ENCODE measurements at regions of chr11 and their contacts with region 1.

Region 1: DNA sequence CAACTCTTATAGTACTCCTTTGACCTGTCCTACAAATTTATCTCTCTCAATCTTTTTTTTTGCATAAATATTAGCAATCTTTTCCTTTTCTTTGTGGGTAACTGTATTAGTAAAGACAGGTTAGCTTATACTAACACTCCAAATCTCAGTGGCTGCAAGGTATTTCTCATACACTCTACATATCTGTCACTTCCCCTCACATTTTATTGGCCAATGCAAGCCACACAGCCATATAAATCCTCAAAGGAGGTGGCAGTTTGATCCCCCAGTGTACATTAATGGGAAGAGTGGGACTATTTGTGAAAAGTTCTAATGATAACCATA is 42.6 kb upstream of the EED start:
- DNase-seq: no peak
- H3K4me3 Mint-ChIP-seq: no peak overlapping the region
- H3K27ac Mint-ChIP-seq: no peak overlapping the region
- H3K4me1 Mint-ChIP-seq: peaks cover 21% of the 10 kb centered on the region
- H3K27me3 Mint-ChIP-seq: no peaks in the 10 kb centered on the region

Region 2: GRCh38 chr11:86047275-86047991 is 154.5 kb before region 1 on chr11:
- intact Hi-C with region 1: loop called (anchors 1 kb)
- DNase-seq: no peak
- H3K4me3 Mint-ChIP-seq: peak overlapping the region; percentile 69
- H3K27ac Mint-ChIP-seq: peak overlapping the region; percentile 91
- H3K4me1 Mint-ChIP-seq: peaks cover 88% of the 10 kb centered on the region
- H3K27me3 Mint-ChIP-seq: no peaks in the 10 kb centered on the region

Region 3: GRCh38 chr11:86138958-86139357 is 63.0 kb before region 1 on chr11:
- intact Hi-C with region 1: loop called (anchors 2 kb)
- DNase-seq: peak; percentile 37
- H3K4me3 Mint-ChIP-seq: peak overlapping the region; percentile 57
- H3K27ac Mint-ChIP-seq: peak overlapping the region; percentile 81
- H3K4me1 Mint-ChIP-seq: peaks cover 75% of the 10 kb centered on the region
- H3K27me3 Mint-ChIP-seq: no peaks in the 10 kb centered on the region

Region 4: GRCh38 chr11:86182976-86183584 is 18.9 kb before region 1 on chr11:
- intact Hi-C with region 1: loop called (anchors 2 kb)
- DNase-seq: peak; percentile 30
- H3K4me3 Mint-ChIP-seq: no peak overlapping the region
- H3K27ac Mint-ChIP-seq: no peak overlapping the region
- H3K4me1 Mint-ChIP-seq: peaks cover 9% of the 10 kb centered on the region
- H3K27me3 Mint-ChIP-seq: no peaks in the 10 kb centered on the region

Region 5: GRCh38 chr11:86370922-86371594 is 169.1 kb after region 1 on chr11:
- intact Hi-C with region 1: no loop called
- DNase-seq: no peak
- H3K4me3 Mint-ChIP-seq: no peak overlapping the region
- H3K27ac Mint-ChIP-seq: no peak overlapping the region
- H3K4me1 Mint-ChIP-seq: peaks cover 14% of the 10 kb centered on the region
- H3K27me3 Mint-ChIP-seq: peaks cover 5% of the 10 kb centered on the region